Mammary epithelial cell (primary cell): ENCODE measurements at regions of chr6 and their contacts with region 1.

Region 1: DNA sequence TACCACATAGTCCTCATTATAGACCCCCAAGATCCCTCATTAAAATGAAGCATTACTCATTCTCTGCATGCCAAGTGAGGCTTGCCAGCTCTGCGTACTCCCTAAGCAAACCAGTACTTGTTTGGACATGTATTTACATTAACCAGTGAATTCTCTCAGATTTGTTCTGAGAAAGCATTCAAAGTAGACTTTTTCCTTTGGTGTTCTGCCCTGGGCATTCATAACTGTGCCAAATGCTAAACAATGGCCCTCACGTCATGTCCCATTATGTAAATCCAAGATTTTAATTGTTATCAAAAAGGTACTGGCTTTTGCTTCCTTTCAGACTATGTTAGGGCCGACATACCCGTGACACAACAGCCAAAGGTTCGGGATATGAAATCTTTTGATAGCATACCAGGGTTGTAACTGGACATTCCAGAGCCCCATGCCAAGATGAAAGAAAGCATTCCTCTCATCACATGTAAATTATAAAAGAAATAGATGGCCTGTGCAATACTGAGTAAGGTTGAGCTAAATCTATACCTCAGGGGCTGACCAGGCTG is 164.2 kb downstream of the ADAT2 start:
- DNase-seq: peak; percentile 90
- H3K4me3 ChIP-seq: no peak overlapping the region
- H3K27ac ChIP-seq: peak overlapping the region; percentile 75
- H3K4me1 ChIP-seq: peaks cover 26% of the 10 kb centered on the region
- H3K27me3 ChIP-seq: no peaks in the 10 kb centered on the region
- CTCF ChIP-seq: no peak

Region 2: GRCh38 chr6:143176090-143177021 is 110.0 kb before region 1 on chr6:
- CTCF ChIA-PET with region 1: no interaction called
- dilution Hi-C with region 1: no loop called
- in situ Hi-C with region 1: no loop called
- intact Hi-C with region 1: no loop called
- DNase-seq: peak; percentile 92
- H3K4me3 ChIP-seq: no peak overlapping the region
- H3K27ac ChIP-seq: peak overlapping the region; percentile 39
- H3K4me1 ChIP-seq: peaks cover 16% of the 10 kb centered on the region
- H3K27me3 ChIP-seq: no peaks in the 10 kb centered on the region
- CTCF ChIP-seq: peak in 1 of 2 donors; percentile 21

Region 3: GRCh38 chr6:143271024-143271423 is 15.3 kb before region 1 on chr6:
- CTCF ChIA-PET with region 1: no interaction called
- dilution Hi-C with region 1: no loop called
- in situ Hi-C with region 1: no loop called
- intact Hi-C with region 1: loop called (anchors 1 kb)
- DNase-seq: peak; percentile 80
- H3K4me3 ChIP-seq: no peak overlapping the region
- H3K27ac ChIP-seq: no peak overlapping the region
- H3K4me1 ChIP-seq: peaks cover 11% of the 10 kb centered on the region
- H3K27me3 ChIP-seq: no peaks in the 10 kb centered on the region
- CTCF ChIP-seq: no peak